IMR-90 (cell line): ENCODE measurements at regions of chr2 and their contacts with region 1.

Region 1: DNA sequence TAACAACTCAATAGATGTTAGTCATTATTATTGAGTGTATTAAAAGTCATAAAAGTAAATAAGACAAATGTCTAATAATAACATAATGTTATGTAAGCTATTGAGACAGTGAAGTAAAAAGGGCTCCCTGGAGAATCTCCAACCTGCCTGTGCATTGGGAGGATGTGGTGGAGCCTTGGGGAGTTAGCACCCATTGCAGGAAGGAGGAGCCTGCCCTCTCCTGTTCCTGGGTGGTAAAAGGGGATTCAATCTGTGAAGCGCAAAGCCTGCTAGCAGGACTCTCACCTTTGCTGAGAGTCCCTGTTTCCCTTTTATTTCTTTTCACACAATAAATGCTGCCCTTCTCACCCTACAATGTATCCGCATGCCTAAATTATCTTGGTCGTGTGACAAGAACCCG is 206.1 kb downstream of the RAB3GAP1 start:
- DNase-seq: no peak
- ATAC-seq: no peak
- H3K4me3 ChIP-seq: no peak overlapping the region
- H3K27ac ChIP-seq: no peak overlapping the region
- H3K4me1 ChIP-seq: no peaks in the 10 kb centered on the region
- H3K27me3 ChIP-seq: no peaks in the 10 kb centered on the region
- CTCF ChIP-seq: no peak
- POLR2A ChIP-seq: no peak
- RAD21 ChIP-seq: no peak

Region 2: GRCh38 chr2:134647607-134648256 is 610.5 kb before region 1 on chr2:
- CTCF ChIA-PET with region 1: no interaction called
- POLR2A ChIA-PET with region 1: no interaction called
- dilution Hi-C with region 1: no loop called
- in situ Hi-C with region 1: no loop called
- intact Hi-C with region 1: loop called (anchors 10 kb)
- DNase-seq: no peak
- ATAC-seq: no peak
- H3K4me3 ChIP-seq: no peak overlapping the region
- H3K27ac ChIP-seq: no peak overlapping the region
- H3K4me1 ChIP-seq: no peaks in the 10 kb centered on the region
- H3K27me3 ChIP-seq: no peaks in the 10 kb centered on the region
- CTCF ChIP-seq: no peak
- POLR2A ChIP-seq: no peak
- RAD21 ChIP-seq: no peak

Region 3: GRCh38 chr2:135113322-135113721 is 144.9 kb before region 1 on chr2:
- CTCF ChIA-PET with region 1: interaction called, 13 read pairs
- POLR2A ChIA-PET with region 1: no interaction called
- dilution Hi-C with region 1: no loop called
- in situ Hi-C with region 1: no loop called
- intact Hi-C with region 1: no loop called
- DNase-seq: no peak
- ATAC-seq: no peak
- H3K4me3 ChIP-seq: no peak overlapping the region
- H3K27ac ChIP-seq: no peak overlapping the region
- H3K4me1 ChIP-seq: no peaks in the 10 kb centered on the region; the same call in 1 of the 2 replicates
- H3K27me3 ChIP-seq: no peaks in the 10 kb centered on the region
- CTCF ChIP-seq: no peak
- POLR2A ChIP-seq: no peak
- RAD21 ChIP-seq: no peak

Region 4: GRCh38 chr2:136259551-136259950 is 1001.4 kb after region 1 on chr2:
- CTCF ChIA-PET with region 1: no interaction called
- POLR2A ChIA-PET with region 1: no interaction called
- dilution Hi-C with region 1: no loop called
- in situ Hi-C with region 1: no loop called
- intact Hi-C with region 1: no loop called
- DNase-seq: no peak
- ATAC-seq: no peak
- H3K4me3 ChIP-seq: no peak overlapping the region
- H3K27ac ChIP-seq: no peak overlapping the region
- H3K4me1 ChIP-seq: no peaks in the 10 kb centered on the region
- H3K27me3 ChIP-seq: no peaks in the 10 kb centered on the region
- CTCF ChIP-seq: no peak
- POLR2A ChIP-seq: no peak
- RAD21 ChIP-seq: no peak